Activated CD4-positive, alpha-beta memory T cell treated with anti-CD3 and anti-CD28 coated beads for 36 hours (primary cell): ENCODE measurements at regions of chr19 and their contacts with region 1.

Region 1: GRCh38 chr19:49676690-49677231 is 310 bp upstream of the PRMT1 start:
- DNase-seq: peak; percentile 100
- H3K4me3 Mint-ChIP-seq: peak overlapping the region; percentile 98
- H3K27ac Mint-ChIP-seq: peak overlapping the region; percentile 96
- H3K4me1 Mint-ChIP-seq: peaks cover 42% of the 10 kb centered on the region
- H3K27me3 Mint-ChIP-seq: no peaks in the 10 kb centered on the region

Region 2: GRCh38 chr19:49451430-49452181 is 225.2 kb before region 1 on chr19 and contains the start of gene PIH1D1:
- CTCF ChIA-PET with region 1: no interaction called
- POLR2A ChIA-PET with region 1: interaction called, 3 read pairs
- intact Hi-C with region 1: loop called (anchors 1 kb)
- DNase-seq: peak; percentile 98
- H3K4me3 Mint-ChIP-seq: peak within 1 kb of the TSS; percentile 100
- H3K27ac Mint-ChIP-seq: peak within 1 kb of the TSS; percentile 99
- H3K4me1 Mint-ChIP-seq: peaks cover 38% of the 10 kb centered on the region
- H3K27me3 Mint-ChIP-seq: no peaks in the 10 kb centered on the region
- total RNA-seq, gene PIH1D1: 117 to 129 TPM

Region 3: DNA sequence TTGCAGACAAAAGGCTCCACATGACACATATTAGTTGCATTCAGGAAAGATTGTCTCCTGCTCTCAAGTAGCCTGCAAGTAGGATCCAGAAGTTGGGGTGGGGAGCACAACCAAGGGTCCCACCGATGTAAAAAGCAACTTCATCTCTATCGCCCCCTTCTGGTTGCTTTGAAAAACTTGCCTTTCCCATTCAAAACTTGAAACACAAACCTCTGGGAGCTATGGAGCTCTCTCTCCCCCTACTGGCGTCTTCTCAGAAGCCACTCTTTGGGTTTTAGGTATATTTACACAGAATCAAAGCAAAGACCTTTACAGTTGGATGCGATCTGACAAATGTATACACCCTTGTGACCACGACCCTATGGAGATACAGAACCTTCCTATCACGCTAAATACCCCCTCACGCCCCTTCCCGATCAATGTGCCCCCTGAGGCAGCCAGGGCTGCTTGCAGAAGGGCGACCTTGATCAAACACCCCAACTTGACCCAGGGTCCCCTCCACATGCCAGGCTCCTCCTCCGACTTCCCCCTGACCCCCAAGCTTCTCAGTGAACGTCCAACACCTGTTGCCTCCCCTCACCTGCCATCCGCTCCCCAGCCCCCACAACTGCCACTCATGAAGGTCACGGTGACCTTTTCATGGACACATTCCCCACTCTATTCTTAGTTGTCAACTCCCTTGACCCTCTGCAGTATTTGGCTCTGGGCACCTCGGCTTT is 106.5 kb before region 1 on chr19:
- CTCF ChIA-PET with region 1: interaction called, 13 read pairs
- POLR2A ChIA-PET with region 1: no interaction called
- intact Hi-C with region 1: loop called (anchors 2 kb)
- DNase-seq: peak; percentile 81
- H3K4me3 Mint-ChIP-seq: peak overlapping the region; percentile 37
- H3K27ac Mint-ChIP-seq: peak overlapping the region; percentile 85
- H3K4me1 Mint-ChIP-seq: peaks cover 47% of the 10 kb centered on the region
- H3K27me3 Mint-ChIP-seq: no peaks in the 10 kb centered on the region

Region 4: GRCh38 chr19:49640113-49640898 is 36.5 kb before region 1 on chr19 and contains the start of gene RRAS:
- CTCF ChIA-PET with region 1: interaction called, 26 read pairs
- POLR2A ChIA-PET with region 1: interaction called, 48 read pairs
- intact Hi-C with region 1: loop called (anchors 1 kb)
- DNase-seq: peak; percentile 100
- H3K4me3 Mint-ChIP-seq: peak within 1 kb of the TSS; percentile 99
- H3K27ac Mint-ChIP-seq: peak within 1 kb of the TSS; percentile 100
- H3K4me1 Mint-ChIP-seq: peaks cover 50% of the 10 kb centered on the region
- H3K27me3 Mint-ChIP-seq: no peaks in the 10 kb centered on the region
- total RNA-seq, gene RRAS: 12.2 to 14.4 TPM

Region 5: DNA sequence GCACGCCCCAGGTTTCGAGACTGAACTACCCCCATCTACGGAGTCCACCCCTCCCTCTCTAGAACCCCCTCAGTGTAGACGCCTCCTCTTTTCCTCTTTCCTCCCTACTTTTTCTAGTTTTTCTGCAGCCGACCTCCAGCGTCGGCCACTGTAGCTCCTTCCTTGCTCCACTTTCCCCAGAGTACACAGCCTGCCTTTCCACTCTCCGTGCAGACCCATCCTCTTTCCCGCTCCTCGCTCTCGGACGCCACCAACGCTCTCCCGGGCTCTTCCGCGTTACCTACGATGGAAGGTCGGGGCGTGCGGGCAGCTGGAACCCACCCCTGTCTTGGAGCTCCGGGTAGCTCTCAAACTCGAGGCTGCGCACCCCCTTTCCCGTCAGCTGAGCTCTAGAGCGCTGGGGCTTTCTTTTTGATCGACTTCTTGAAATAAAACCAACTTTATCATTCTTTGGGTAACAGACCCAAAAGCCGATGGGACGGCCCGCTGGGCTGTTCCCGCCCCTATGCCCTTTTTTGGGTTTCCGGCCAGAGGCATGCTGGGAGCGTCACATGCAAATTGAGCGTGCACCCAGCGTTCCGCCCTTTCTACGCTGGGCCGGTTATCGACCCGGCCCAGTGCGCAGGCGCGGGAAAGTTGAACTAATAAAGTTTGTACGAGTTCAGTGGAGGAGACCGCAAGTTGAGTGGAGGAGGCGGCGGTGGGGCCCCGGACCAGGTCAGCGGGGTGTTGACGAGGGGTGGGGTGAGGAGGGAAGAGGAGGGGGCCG is 11.2 kb before region 1 on chr19 and contains the starts of genes BCL2L12 and IRF3:
- CTCF ChIA-PET with region 1: interaction called, 31 read pairs
- POLR2A ChIA-PET with region 1: interaction called, 29 read pairs
- intact Hi-C with region 1: loop called (anchors 1 kb)
- DNase-seq: peak; percentile 99
- H3K4me3 Mint-ChIP-seq: peak within 1 kb of the TSS; percentile 99
- H3K27ac Mint-ChIP-seq: peak within 1 kb of the TSS; percentile 96
- H3K4me1 Mint-ChIP-seq: peaks cover 32% of the 10 kb centered on the region
- H3K27me3 Mint-ChIP-seq: no peaks in the 10 kb centered on the region
- total RNA-seq, gene BCL2L12: 87.2 to 89.1 TPM
- total RNA-seq, gene IRF3: 143 to 156 TPM

Region 6: GRCh38 chr19:49746206-49747091 is 69.7 kb after region 1 on chr19:
- CTCF ChIA-PET with region 1: no interaction called
- POLR2A ChIA-PET with region 1: no interaction called
- intact Hi-C with region 1: no loop called
- DNase-seq: peak; percentile 66
- H3K4me3 Mint-ChIP-seq: no peak overlapping the region
- H3K27ac Mint-ChIP-seq: no peak overlapping the region
- H3K4me1 Mint-ChIP-seq: no peaks in the 10 kb centered on the region
- H3K27me3 Mint-ChIP-seq: peaks cover 2% of the 10 kb centered on the region

Region 7: DNA sequence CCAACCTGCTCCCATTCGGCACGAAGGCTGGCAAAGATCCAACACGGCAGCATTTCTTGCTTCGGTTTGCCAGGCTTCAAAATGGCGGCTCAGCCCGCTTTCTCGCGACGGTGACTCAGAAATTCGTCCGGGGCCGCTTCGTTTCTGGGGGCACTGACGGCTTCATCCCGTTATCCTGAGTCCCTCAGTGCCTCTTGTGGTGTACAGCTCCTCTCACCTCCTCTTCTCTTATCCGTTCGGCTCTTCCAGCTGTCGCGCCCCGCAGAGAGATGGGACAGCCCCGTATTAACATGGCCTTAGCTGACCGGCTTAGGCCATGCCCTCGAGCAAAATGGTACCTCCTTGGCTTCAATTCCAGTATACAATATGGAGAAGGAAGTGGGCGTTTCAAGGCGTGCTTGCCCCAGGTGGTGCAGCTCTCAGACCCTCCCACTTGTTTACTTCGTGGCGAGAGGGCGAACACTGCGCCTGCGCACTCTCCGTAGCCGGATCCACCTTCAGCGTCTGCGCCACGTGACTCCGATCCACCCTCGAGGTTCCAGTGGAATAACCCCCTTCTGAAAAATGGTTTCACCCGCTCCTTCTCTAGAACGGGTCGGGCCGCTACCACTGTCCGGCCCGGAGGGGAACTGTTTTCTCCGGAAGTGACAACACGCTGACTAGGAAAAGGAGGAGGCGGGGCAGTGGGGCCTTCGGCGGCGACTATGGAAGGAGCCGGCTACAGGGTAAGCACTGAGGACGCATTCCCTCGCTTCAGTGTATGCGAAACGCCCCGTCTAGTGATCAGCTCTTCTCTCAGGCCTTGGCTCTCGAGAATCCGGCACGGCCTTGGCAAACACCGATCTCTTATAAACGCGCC is 200.5 kb after region 1 on chr19 and contains the starts of genes AKT1S1 and TBC1D17:
- CTCF ChIA-PET with region 1: no interaction called
- POLR2A ChIA-PET with region 1: no interaction called
- intact Hi-C with region 1: loop called (anchors 1 kb)
- DNase-seq: peak; percentile 99
- H3K4me3 Mint-ChIP-seq: no peak within 1 kb of the TSS
- H3K27ac Mint-ChIP-seq: no peak within 1 kb of the TSS
- H3K4me1 Mint-ChIP-seq: peaks cover 26% of the 10 kb centered on the region
- H3K27me3 Mint-ChIP-seq: no peaks in the 10 kb centered on the region
- total RNA-seq, gene AKT1S1: 19.6 TPM
- total RNA-seq, gene TBC1D17: 32.5 to 34.7 TPM

Region 8: GRCh38 chr19:50046649-50047503 is 370.1 kb after region 1 on chr19:
- CTCF ChIA-PET with region 1: no interaction called
- POLR2A ChIA-PET with region 1: no interaction called
- intact Hi-C with region 1: no loop called
- DNase-seq: peak; percentile 61
- H3K4me3 Mint-ChIP-seq: no peak overlapping the region
- H3K27ac Mint-ChIP-seq: no peak overlapping the region
- H3K4me1 Mint-ChIP-seq: peaks cover 13% of the 10 kb centered on the region
- H3K27me3 Mint-ChIP-seq: no peaks in the 10 kb centered on the region